ENCODE measurements at regions of chr1 and their contacts with region 1.

Region 1: DNA sequence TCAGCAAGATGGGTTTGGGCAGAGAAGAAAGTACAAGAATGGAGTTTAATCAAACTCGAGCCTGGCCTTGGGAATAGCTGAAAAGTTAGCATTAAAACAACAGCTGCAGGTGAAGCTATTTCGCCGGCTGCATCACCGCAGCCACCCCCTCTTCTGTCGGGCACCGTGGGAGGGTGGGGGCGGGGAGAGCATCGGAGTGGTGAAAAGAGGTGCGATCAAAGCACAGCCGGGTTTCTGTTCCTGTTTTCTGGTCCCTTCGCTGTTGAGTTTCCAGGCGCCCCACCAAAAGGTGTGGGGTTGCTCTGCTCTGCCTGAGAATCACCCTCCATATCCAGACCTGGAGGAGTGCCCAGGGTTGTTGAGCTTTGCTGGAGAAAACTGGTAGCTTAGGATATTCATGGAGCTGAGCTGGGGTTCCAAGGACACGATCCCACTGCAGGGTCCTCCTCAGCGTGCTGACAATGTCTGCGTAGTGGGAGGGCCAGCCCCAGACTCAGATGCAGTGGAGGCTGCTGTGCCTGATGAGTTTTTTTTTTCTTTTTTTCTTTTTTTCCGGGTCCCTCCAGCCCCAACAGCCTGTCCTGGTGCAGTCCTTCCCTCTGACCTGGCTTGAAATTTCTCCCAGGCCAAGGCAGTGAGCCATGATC is 127.5 kb upstream of the C1orf174 start:
- DNase-seq: no peak
- H3K4me3 ChIP-seq: no peak overlapping the region
- H3K4me3 Mint-ChIP-seq: no peak overlapping the region
- H3K27ac ChIP-seq: no peak overlapping the region
- H3K27ac Mint-ChIP-seq: no peak overlapping the region
- H3K4me1 ChIP-seq: no peaks in the 10 kb centered on the region
- H3K4me1 Mint-ChIP-seq: no peaks in the 10 kb centered on the region
- H3K27me3 ChIP-seq: no peaks in the 10 kb centered on the region
- H3K27me3 Mint-ChIP-seq: peaks cover 2 to 7% (median 2%) of the 10 kb centered on the region in 3 donors
- CTCF ChIP-seq: no peak

Region 2: GRCh38 chr1:3890389-3891328 is 137.0 kb before region 1 on chr1:
- intact Hi-C with region 1: no loop called
- DNase-seq: peak; percentile 59 to 69 (median 63)
- H3K4me3 ChIP-seq: peak overlapping the region; percentile 16 to 62 (median 20)
- H3K4me3 Mint-ChIP-seq: peak overlapping the region; percentile 59 to 80
- H3K27ac ChIP-seq: peak overlapping the region; percentile 63 to 81
- H3K27ac Mint-ChIP-seq: peak overlapping the region; percentile 86 to 94 (median 92)
- H3K4me1 ChIP-seq: peaks cover 31 to 38% of the 10 kb centered on the region in 2 donors
- H3K4me1 Mint-ChIP-seq: peaks cover 26% of the 10 kb centered on the region
- H3K27me3 ChIP-seq: no peaks in the 10 kb centered on the region
- H3K27me3 Mint-ChIP-seq: peaks cover 0 to 2% (median 0%) of the 10 kb centered on the region in 3 donors
- CTCF ChIP-seq: peak; percentile 33

Region 3: GRCh38 chr1:4083231-4084047 is 55.8 kb after region 1 on chr1:
- intact Hi-C with region 1: loop called in 1 of 2 experiments (anchors 10 kb)
- DNase-seq: no peak
- H3K4me3 ChIP-seq: no peak overlapping the region
- H3K4me3 Mint-ChIP-seq: no peak overlapping the region
- H3K27ac ChIP-seq: no peak overlapping the region
- H3K27ac Mint-ChIP-seq: no peak overlapping the region
- H3K4me1 ChIP-seq: no peaks in the 10 kb centered on the region
- H3K4me1 Mint-ChIP-seq: no peaks in the 10 kb centered on the region
- H3K27me3 ChIP-seq: no peaks in the 10 kb centered on the region
- H3K27me3 Mint-ChIP-seq: peaks cover 0 to 2% (median 1%) of the 10 kb centered on the region in 3 donors
- CTCF ChIP-seq: no peak

Region 4: DNA sequence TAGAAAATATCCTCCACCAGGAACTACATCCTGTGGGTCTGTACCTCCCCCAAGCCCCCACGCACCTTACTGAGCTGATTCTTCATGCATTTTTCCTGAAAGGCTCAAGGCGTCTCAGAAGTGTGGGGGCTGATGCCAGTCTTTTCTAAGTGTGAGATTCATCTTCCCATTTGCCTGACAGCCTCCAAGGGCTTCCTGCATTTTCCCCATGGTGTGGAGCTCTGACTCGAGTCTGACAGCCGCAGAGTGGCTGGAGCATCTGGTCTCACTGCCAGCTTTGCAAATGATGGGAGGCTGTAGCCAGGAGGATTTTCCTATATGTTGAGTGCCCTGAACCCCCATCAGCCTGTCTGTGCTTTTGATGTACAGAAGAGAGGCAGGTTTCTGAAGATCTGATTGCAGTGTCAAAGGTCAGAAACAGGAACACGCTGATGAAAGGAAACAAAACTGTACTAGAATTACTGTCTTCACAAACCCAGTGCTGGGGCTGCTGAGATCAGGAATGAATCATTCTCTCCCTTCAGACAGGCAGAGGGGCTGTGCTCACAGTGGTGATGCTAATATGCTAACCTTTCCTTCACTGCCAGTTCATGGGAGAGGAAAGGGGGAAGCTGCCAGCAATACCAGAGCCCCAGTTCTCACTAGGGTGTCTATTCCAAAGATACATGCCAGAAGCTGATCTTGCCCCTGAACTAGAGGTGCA is 74.0 kb after region 1 on chr1:
- intact Hi-C with region 1: no loop called
- DNase-seq: no peak
- H3K4me3 ChIP-seq: no peak overlapping the region
- H3K4me3 Mint-ChIP-seq: no peak overlapping the region
- H3K27ac ChIP-seq: no peak overlapping the region
- H3K27ac Mint-ChIP-seq: no peak overlapping the region
- H3K4me1 ChIP-seq: no peaks in the 10 kb centered on the region
- H3K4me1 Mint-ChIP-seq: no peaks in the 10 kb centered on the region
- H3K27me3 ChIP-seq: no peaks in the 10 kb centered on the region
- H3K27me3 Mint-ChIP-seq: no peaks in the 10 kb centered on the region
- CTCF ChIP-seq: no peak

Measured in CD14-positive monocyte (primary cell).